Thyroid gland (tissue), 4 donors: ENCODE measurements at regions of chr6 and their contacts with region 1.

Region 1: GRCh38 chr6:143689848-143690247 is 12.1 kb downstream of the PHACTR2 start:
- DNase-seq: no peak
- H3K4me3 ChIP-seq: no peak overlapping the region
- H3K27ac ChIP-seq: peak overlapping the region in 1 of 3 donors; percentile 13
- H3K4me1 ChIP-seq: peaks cover 34 to 39% of the 10 kb centered on the region in 2 donors
- H3K27me3 ChIP-seq: no peaks in the 10 kb centered on the region
- CTCF ChIP-seq: no peak
- POLR2A ChIP-seq: no peak

Region 2: GRCh38 chr6:143465546-143465945 is 224.3 kb before region 1 on chr6:
- intact Hi-C with region 1: no loop called
- DNase-seq: no peak
- H3K4me3 ChIP-seq: no peak overlapping the region
- H3K27ac ChIP-seq: no peak overlapping the region
- H3K4me1 ChIP-seq: no peaks in the 10 kb centered on the region
- H3K27me3 ChIP-seq: no peaks in the 10 kb centered on the region
- CTCF ChIP-seq: no peak
- POLR2A ChIP-seq: no peak

Region 3: DNA sequence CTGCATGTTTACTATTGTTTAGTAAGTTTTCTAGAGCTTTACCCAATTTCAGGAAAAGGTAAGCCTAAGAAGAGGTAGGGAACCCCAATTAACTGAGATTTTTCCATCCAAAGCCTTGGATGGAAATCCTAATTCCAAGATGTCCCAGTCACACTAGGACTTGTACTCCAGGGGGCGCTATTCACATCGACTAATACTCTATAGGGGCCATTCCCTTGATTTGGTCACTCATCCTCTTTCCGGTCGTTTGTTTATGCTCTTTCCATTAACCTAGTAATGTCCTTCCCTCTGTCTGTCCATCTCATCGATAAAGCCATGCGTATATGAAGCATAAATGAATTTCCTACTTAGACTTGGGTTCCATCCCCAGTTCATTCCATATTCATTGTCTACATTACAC is 97.5 kb before region 1 on chr6:
- intact Hi-C with region 1: no loop called
- DNase-seq: no peak
- H3K4me3 ChIP-seq: no peak overlapping the region
- H3K27ac ChIP-seq: no peak overlapping the region
- H3K4me1 ChIP-seq: peaks cover 22 to 32% of the 10 kb centered on the region in 2 donors
- H3K27me3 ChIP-seq: no peaks in the 10 kb centered on the region
- CTCF ChIP-seq: no peak
- POLR2A ChIP-seq: no peak

Region 4: GRCh38 chr6:143634493-143634892 is 55.4 kb before region 1 on chr6:
- intact Hi-C with region 1: no loop called
- DNase-seq: no peak
- H3K4me3 ChIP-seq: no peak overlapping the region
- H3K27ac ChIP-seq: no peak overlapping the region
- H3K4me1 ChIP-seq: no peaks in the 10 kb centered on the region
- H3K27me3 ChIP-seq: no peaks in the 10 kb centered on the region
- CTCF ChIP-seq: no peak
- POLR2A ChIP-seq: no peak

Region 5: DNA sequence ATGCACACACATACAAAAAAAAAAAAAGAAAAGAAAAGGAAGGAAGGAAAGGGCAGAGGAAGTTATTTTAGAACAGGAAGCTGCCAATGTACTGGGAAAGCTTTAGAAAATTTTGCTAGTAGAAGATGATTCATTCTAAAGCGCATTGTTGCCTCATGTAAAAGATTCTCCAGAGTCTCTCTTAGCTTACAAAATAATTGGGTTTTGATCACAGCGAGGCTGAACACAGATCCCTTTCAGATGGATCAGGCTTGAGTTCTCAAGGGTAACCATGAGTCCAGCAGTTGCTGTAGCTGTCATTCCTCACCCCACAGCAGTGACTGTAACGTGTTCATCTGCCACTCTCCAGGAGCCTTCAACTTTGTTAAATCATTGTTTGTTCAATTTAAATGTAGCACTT is 69.8 kb after region 1 on chr6:
- intact Hi-C with region 1: loop called (anchors 10 kb)
- DNase-seq: no peak
- H3K4me3 ChIP-seq: no peak overlapping the region
- H3K27ac ChIP-seq: no peak overlapping the region
- H3K4me1 ChIP-seq: peaks cover 8 to 13% of the 10 kb centered on the region in 2 donors
- H3K27me3 ChIP-seq: no peaks in the 10 kb centered on the region
- CTCF ChIP-seq: no peak
- POLR2A ChIP-seq: no peak